Heart left ventricle (tissue), 16 donors: ENCODE measurements at regions of chr19 and their contacts with region 1.

Region 1: DNA sequence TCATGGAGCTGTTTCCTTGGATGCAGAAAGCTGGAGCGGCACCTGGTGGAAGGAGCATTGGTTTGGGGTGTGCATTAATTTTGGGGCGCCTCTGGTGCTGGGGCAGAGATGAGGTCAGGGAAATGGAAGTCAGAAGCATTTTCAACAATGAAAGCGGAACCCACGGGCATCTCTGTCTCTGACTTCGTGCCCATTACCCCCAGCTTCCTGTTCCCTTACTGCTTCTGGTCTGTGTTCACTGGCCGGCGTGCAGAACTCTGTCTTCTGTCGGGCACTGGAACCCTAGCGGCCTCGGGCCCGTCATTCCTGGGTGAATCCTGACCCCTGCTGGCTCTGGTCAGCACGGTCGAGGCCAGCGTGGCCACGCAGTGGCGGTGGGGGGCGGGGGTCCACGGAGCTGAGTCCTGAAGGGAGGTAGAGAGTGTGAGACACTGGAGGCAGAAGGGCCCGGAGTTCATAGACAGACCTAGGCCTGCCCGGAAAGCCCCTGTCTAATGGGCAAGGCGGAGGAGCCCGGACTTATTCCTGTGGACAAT is 7.9 kb upstream of the LINGO3 start:
- DNase-seq: peak; percentile 73 to 89 (median 77)
- ATAC-seq: peak; percentile 92 to 94 (median 94)
- H3K4me3 ChIP-seq: no peak overlapping the region
- H3K27ac ChIP-seq: peak overlapping the region in 1 of 12 donors; percentile 70
- H3K4me1 ChIP-seq: peaks cover 0 to 14% (median 7%) of the 10 kb centered on the region in 12 donors
- H3K27me3 ChIP-seq: peaks cover 3 to 30% (median 13%) of the 10 kb centered on the region in 9 donors
- CTCF ChIP-seq: peak; percentile 52 to 74 (median 61)
- POLR2A ChIP-seq: no peak

Region 2: GRCh38 chr19:1929021-1929742 is 386.7 kb before region 1 on chr19:
- intact Hi-C with region 1: loop called in 1 of 10 experiments (anchors 10 kb)
- DNase-seq: peak; percentile 73 to 89 (median 78)
- ATAC-seq: peak; percentile 62 to 94 (median 90)
- H3K4me3 ChIP-seq: peak overlapping the region in 11 of 12 donors; percentile 21 to 59 (median 45)
- H3K27ac ChIP-seq: no peak overlapping the region
- H3K4me1 ChIP-seq: peaks cover 0 to 15% (median 10%) of the 10 kb centered on the region in 12 donors
- H3K27me3 ChIP-seq: no peaks in the 10 kb centered on the region
- CTCF ChIP-seq: peak; percentile 82 to 95 (median 90)
- POLR2A ChIP-seq: no peak

Region 3: GRCh38 chr19:2161688-2162053 is 154.2 kb before region 1 on chr19:
- intact Hi-C with region 1: loop called in 8 of 10 experiments (anchors 1 to 5 kb)
- DNase-seq: no peak
- ATAC-seq: no peak
- H3K4me3 ChIP-seq: no peak overlapping the region
- H3K27ac ChIP-seq: no peak overlapping the region
- H3K4me1 ChIP-seq: peaks cover 2 to 31% (median 21%) of the 10 kb centered on the region in 12 donors
- H3K27me3 ChIP-seq: no peaks in the 10 kb centered on the region
- CTCF ChIP-seq: no peak
- POLR2A ChIP-seq: no peak

Region 4: DNA sequence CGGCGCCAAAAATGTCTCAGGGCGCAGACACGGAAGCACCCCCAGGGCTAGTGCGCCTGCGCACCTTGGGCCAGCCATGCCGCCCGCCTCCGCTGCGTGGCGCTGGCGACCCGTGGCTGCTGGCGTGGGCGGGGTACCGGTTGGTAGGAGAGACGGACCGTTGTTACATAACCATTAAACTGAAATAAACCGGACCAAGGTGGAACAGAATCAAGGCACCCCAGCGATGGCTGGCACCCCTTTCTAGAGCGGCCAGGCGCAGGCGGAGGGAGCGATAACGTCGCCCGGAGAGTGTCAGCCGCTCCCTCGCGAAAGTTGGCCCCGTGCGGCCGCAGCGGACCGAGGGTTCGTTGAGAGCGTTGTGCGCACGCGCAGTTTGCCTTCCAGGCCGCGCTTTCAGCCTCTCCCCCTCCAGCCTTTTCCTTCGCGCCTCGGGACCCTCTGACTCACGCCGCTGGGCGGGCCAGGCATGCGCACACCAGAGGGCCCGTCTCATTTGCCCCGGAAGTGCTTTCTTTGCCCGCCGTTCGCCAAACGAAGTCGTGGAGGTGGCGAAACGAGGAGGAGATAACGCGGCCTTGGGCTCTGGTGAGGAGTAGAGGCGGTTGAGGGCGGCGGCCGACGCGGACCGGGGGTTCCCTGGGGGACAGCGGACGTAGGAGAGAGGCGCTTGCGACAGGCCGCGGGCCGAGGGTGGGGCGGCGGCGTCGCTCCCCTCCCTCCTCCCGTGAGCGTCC is 79.4 kb before region 1 on chr19 and contains the starts of genes PLEKHJ1 and SF3A2:
- intact Hi-C with region 1: loop called in 6 of 10 experiments (anchors 1 to 10 kb)
- DNase-seq: peak; percentile 97 to 99 (median 98)
- ATAC-seq: peak; percentile 91 to 95 (median 94)
- H3K4me3 ChIP-seq: peak within 1 kb of the TSS; percentile 72 to 98 (median 94)
- H3K27ac ChIP-seq: peak within 1 kb of the TSS; percentile 92 to 100 (median 99)
- H3K4me1 ChIP-seq: peaks cover 14 to 75% (median 54%) of the 10 kb centered on the region in 12 donors
- H3K27me3 ChIP-seq: no peaks in the 10 kb centered on the region
- CTCF ChIP-seq: peak; percentile 92 to 100 (median 98)
- POLR2A ChIP-seq: peak in 1 of 2 donors; percentile 52
- total RNA-seq, gene PLEKHJ1: 44.6 to 63.2 (median 46.5) TPM
- total RNA-seq, gene SF3A2: 19.2 to 43.9 (median 28.6) TPM

Region 5: GRCh38 chr19:2269244-2269947 is 46.5 kb before region 1 on chr19:
- intact Hi-C with region 1: loop called in 5 of 10 experiments (anchors 2 to 5 kb)
- DNase-seq: peak; percentile 98 to 100 (median 99)
- ATAC-seq: peak; percentile 89 to 92 (median 91)
- H3K4me3 ChIP-seq: peak overlapping the region; percentile 87 to 100 (median 98)
- H3K27ac ChIP-seq: peak overlapping the region; percentile 91 to 100 (median 99)
- H3K4me1 ChIP-seq: peaks cover 9 to 73% (median 42%) of the 10 kb centered on the region in 12 donors
- H3K27me3 ChIP-seq: no peaks in the 10 kb centered on the region
- CTCF ChIP-seq: no peak
- POLR2A ChIP-seq: peak; percentile 100

Region 6: DNA sequence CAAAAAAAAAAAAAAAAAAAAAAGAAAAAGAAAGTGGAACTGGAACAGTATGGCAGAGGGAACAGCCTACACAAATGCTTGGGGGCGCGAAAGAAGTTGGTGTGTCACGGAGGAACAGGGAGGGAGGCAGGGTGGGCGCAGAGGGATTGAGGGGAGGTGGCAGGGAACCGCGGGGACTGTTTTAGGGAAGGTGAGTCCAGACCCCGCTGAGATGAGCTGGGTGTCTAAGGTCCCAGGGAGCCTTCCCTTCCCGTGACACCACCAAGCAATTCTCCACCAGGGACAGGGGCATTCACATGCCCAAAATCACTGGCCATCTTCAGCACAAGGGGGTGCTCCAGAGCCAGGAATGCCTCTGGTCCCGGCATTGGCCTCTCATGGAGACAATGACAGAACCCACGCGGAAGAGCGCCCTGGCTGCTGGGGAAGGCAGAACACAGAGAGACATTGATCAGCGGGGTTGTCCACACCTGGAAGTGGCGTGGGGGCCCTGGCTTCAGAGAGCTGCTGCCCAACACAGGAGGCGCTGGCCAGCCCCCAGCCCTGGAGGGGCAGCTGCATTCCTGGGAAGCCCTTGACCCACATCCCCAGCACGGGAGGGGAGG is 40.9 kb before region 1 on chr19:
- intact Hi-C with region 1: loop called in 7 of 10 experiments (anchors 1 to 5 kb)
- DNase-seq: peak; percentile 66 to 79 (median 78)
- ATAC-seq: peak; percentile 33 to 58 (median 42)
- H3K4me3 ChIP-seq: no peak overlapping the region
- H3K27ac ChIP-seq: peak overlapping the region in 8 of 12 donors; percentile 8 to 56 (median 24)
- H3K4me1 ChIP-seq: peaks cover 9 to 53% (median 41%) of the 10 kb centered on the region in 12 donors
- H3K27me3 ChIP-seq: no peaks in the 10 kb centered on the region
- CTCF ChIP-seq: peak; percentile 32 to 67 (median 53)
- POLR2A ChIP-seq: no peak

Region 7: GRCh38 chr19:2385053-2385721 is 69.3 kb after region 1 on chr19:
- intact Hi-C with region 1: loop called in 1 of 10 experiments (anchors 2 kb)
- DNase-seq: no peak
- ATAC-seq: peak in 1 of 4 donors; percentile 20
- H3K4me3 ChIP-seq: no peak overlapping the region
- H3K27ac ChIP-seq: no peak overlapping the region
- H3K4me1 ChIP-seq: peaks cover 0 to 20% (median 0%) of the 10 kb centered on the region in 12 donors
- H3K27me3 ChIP-seq: peaks cover 0 to 32% (median 5%) of the 10 kb centered on the region in 9 donors
- CTCF ChIP-seq: no peak
- POLR2A ChIP-seq: no peak